Body of pancreas (tissue), 4 donors: ENCODE measurements at regions of chr15 and their contacts with region 1.

Region 1: GRCh38 chr15:97909291-97909891 is 51.1 kb upstream of the ARRDC4 start:
- DNase-seq: peak; percentile 71 to 77 (median 74)
- ATAC-seq: peak; percentile 74
- H3K4me3 ChIP-seq: no peak overlapping the region
- H3K27ac ChIP-seq: no peak overlapping the region
- H3K4me1 ChIP-seq: peaks cover 1% of the 10 kb centered on the region
- H3K27me3 ChIP-seq: no peaks in the 10 kb centered on the region
- CTCF ChIP-seq: peak; percentile 47 to 90 (median 87)
- POLR2A ChIP-seq: no peak

Region 2: DNA sequence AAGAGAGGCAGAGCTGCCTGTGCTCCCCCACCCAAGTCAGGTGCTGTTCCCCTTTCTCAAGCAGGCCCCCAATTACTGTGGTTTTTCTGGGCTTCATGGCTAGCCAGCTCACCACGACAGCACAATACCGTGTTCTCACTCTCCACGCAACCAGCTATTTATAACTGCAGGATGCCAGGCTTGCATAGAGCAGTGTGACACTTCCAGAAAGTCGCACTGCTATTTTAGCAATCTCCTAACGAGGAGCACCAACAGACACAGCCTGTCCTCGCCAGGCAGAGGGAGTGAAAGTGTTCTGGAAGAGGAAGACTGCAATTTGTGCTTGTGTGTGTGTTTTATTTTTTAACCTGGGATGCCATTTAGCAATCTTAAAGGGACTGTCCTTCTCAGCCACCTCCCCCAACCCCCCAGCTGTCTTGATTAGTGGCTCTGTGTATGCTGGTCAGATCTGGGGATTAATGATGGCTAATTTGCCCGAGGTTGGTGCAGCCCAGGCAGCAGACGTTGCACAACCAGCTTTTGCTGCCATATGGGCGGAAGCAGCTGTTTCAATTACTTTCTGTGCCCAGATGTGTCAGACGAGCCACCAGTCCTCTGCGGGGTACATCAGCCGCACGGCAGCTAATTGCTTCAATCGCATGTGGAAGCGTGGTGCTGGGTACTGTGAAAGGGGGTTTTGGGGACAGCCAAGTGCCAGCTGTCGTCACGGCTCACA is 216.9 kb before region 1 on chr15:
- intact Hi-C with region 1: no loop called
- DNase-seq: no peak
- ATAC-seq: no peak
- H3K4me3 ChIP-seq: no peak overlapping the region
- H3K27ac ChIP-seq: no peak overlapping the region
- H3K4me1 ChIP-seq: no peaks in the 10 kb centered on the region
- H3K27me3 ChIP-seq: no peaks in the 10 kb centered on the region
- CTCF ChIP-seq: no peak
- POLR2A ChIP-seq: no peak

Region 3: DNA sequence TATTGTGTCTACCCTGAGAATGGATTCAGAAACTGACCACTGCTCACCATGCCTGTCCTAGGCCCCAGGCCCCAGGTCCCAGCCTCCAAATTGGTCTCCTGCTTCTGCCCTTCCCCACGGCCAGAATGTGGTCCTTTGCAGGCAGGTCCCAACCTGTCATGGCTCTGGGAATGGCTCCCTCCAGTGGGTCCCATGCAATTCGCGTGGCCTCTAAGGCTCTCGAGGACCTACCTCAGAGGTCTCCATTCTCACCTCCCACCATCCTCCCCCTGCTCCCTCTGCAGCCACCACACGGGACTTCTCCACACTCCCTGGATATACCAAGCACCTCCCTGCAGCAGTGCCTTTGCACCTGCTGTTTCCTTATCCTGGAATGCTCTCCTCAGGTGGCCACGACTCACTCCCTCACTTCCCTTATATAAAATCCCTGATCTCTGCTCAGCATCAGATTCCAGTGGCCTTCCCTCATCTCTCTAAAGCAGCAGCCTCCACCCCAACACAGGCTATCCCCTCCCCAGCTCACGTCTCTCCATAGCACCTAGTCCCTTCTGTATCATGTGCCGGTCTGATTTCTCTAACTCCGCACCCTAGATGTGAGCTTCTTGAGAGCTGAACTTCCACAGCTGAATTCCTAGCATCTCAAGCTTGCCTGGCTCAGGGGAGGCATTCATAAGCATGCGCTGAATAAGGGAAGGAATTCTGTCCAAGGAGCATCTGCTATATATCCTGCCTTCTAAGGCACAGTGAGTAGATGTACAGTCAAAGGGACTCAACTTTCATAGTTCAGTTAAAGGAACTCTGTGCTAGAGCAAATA is 108.0 kb after region 1 on chr15:
- intact Hi-C with region 1: no loop called
- DNase-seq: no peak
- ATAC-seq: no peak
- H3K4me3 ChIP-seq: no peak overlapping the region
- H3K27ac ChIP-seq: no peak overlapping the region
- H3K4me1 ChIP-seq: peaks cover 9% of the 10 kb centered on the region
- H3K27me3 ChIP-seq: no peaks in the 10 kb centered on the region
- CTCF ChIP-seq: no peak
- POLR2A ChIP-seq: no peak

Region 4: GRCh38 chr15:98085003-98085639 is 175.7 kb after region 1 on chr15:
- intact Hi-C with region 1: loop called (anchors 5 kb)
- DNase-seq: peak; percentile 62 to 72 (median 64)
- ATAC-seq: no peak
- H3K4me3 ChIP-seq: no peak overlapping the region
- H3K27ac ChIP-seq: no peak overlapping the region
- H3K4me1 ChIP-seq: no peaks in the 10 kb centered on the region
- H3K27me3 ChIP-seq: no peaks in the 10 kb centered on the region
- CTCF ChIP-seq: peak; percentile 44 to 81 (median 71)
- POLR2A ChIP-seq: no peak

Region 5: DNA sequence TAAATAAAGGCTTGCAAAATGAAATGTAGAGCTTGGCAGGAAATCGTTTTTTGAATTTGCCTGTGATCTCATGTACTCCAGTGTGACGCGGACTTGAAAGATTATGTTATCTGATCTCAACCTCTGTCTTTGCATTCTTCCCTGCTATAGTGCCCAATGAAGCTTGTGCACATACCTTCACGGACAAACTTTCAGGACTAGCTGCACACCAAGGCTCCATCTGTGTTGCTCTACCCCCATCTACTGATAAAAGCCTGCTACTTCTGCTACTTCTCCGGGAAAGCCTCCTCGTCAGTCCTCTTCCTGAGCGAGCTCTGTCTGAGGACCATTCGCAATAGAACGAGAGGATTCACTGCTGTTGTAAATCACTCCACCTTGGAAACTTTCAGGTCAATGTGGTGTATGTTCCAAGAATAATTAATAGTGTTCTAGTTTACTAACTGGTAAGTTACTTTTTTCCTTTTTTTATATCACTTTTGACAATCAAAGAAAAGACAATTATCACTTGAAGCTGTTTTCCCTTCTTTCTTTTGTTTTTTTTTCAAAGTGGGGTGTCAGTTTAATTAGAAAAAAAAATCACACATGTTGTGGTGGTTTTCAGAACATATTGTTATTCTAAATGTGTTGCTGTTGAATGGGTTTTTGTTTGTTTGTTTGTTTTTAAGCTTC is 268.7 kb after region 1 on chr15:
- intact Hi-C with region 1: loop called (anchors 10 kb)
- DNase-seq: peak; percentile 29 to 60 (median 48)
- ATAC-seq: peak; percentile 73
- H3K4me3 ChIP-seq: no peak overlapping the region
- H3K27ac ChIP-seq: no peak overlapping the region
- H3K4me1 ChIP-seq: no peaks in the 10 kb centered on the region
- H3K27me3 ChIP-seq: no peaks in the 10 kb centered on the region
- CTCF ChIP-seq: peak; percentile 29 to 82 (median 71)
- POLR2A ChIP-seq: no peak

Region 6: DNA sequence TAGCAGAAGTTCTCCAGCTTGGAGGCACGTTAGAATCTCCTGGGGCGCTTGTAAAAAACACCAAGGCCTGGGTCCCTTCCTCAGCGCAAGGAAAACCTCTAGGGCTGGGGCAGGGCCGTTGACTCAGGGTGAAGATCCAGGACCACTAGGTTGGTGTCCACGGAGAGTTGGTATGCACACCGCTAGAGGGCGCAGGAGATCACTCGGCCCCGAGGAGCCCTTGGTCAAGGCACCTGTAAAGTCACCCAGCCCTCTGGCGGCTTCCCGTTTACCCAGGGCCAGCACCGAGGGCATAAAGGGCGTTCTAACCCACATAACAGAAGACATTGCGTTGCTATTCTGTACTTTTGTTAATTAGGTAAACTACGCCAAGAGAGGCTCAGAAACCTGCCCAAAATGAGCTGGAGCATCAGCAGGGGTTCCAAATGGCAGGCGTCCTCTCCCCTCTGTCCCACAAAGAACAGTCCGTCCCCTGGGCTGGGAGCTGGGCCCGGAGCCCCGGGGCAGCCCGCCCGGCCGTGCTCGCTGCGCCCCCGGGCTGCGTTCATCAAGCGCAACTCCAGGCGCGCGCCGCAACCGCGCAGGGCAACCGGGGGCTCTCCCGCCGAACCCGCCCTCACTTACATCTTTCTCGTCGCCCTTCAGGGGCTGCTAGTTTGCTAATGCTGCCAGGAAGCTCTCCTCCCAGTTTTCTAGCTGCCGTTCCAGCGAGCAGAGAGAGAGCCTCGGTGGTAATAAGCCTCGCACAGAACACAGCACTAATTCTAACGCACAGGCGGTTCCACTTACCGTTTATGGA is 383.2 kb after region 1 on chr15:
- intact Hi-C with region 1: loop called (anchors 10 kb)
- DNase-seq: peak; percentile 32 to 58 (median 48)
- ATAC-seq: no peak
- H3K4me3 ChIP-seq: no peak overlapping the region
- H3K27ac ChIP-seq: no peak overlapping the region
- H3K4me1 ChIP-seq: peaks cover 8% of the 10 kb centered on the region
- H3K27me3 ChIP-seq: peaks cover 0 to 6% of the 10 kb centered on the region in 2 donors
- CTCF ChIP-seq: peak; percentile 29 to 51 (median 40)
- POLR2A ChIP-seq: no peak